Activated naive CD4-positive, alpha-beta T cell treated with anti-CD3 and anti-CD28 coated beads for 36 hours (primary cell): ENCODE measurements at regions of chr6 and their contacts with region 1.

Region 1: DNA sequence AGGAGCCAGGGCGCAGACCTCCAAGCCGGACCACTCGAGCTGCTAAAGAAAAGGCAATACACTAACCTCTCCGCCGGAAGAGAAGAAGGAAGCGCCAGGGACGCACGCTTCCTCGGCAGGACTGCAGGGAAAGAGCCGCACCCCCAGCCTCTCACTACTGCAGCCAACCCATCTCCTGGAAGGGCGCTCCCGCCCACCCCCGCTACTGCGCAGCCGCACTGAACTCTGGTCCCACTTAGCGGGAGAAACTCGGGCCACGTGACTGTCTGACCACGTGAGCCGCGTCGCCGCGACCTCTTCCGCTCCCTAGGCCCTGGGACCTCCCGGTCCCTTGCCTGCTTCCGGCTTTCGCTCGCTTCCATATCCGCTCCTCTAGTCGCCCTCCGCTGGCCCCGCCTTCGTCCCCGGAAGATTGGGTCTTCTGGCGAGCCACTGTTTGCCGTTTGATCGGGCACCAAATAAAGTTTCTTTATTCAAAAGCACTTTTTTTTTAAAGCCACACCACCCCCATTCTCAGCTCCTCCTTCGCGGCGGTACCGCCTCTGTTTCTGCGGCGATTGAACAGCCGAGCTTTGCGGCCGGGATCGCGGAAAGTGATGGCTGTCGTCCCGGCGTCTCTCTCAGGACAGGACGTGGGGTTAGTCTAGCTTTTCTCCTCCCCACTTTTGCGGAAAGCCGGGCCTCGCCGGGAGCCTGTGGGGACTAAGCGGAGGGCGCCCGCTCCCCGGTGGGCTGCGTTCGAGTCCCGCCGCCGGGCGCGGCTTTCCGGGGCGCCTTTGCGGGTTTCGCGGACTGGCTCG is at the start of gene RMND1:
- DNase-seq: peak; percentile 100
- H3K4me3 Mint-ChIP-seq: peak within 1 kb of the TSS; percentile 97
- H3K27ac Mint-ChIP-seq: peak within 1 kb of the TSS; percentile 86
- H3K4me1 Mint-ChIP-seq: peaks cover 27% of the 10 kb centered on the region
- H3K27me3 Mint-ChIP-seq: no peaks in the 10 kb centered on the region
- total RNA-seq, gene RMND1: 16.7 to 18.4 TPM

Region 2: GRCh38 chr6:149934249-149935156 is 1517.6 kb before region 1 on chr6:
- CTCF ChIA-PET with region 1: no interaction called
- intact Hi-C with region 1: loop called (anchors 1 kb)
- DNase-seq: peak; percentile 84
- H3K4me3 Mint-ChIP-seq: no peak overlapping the region
- H3K27ac Mint-ChIP-seq: no peak overlapping the region
- H3K4me1 Mint-ChIP-seq: peaks cover 17% of the 10 kb centered on the region
- H3K27me3 Mint-ChIP-seq: peaks cover 71% of the 10 kb centered on the region

Region 3: GRCh38 chr6:150987371-150987828 is 464.8 kb before region 1 on chr6:
- CTCF ChIA-PET with region 1: no interaction called
- intact Hi-C with region 1: loop called (anchors 5 kb)
- DNase-seq: peak; percentile 79
- H3K4me3 Mint-ChIP-seq: no peak overlapping the region
- H3K27ac Mint-ChIP-seq: peak overlapping the region; percentile 90
- H3K4me1 Mint-ChIP-seq: peaks cover 7% of the 10 kb centered on the region
- H3K27me3 Mint-ChIP-seq: no peaks in the 10 kb centered on the region

Region 4: DNA sequence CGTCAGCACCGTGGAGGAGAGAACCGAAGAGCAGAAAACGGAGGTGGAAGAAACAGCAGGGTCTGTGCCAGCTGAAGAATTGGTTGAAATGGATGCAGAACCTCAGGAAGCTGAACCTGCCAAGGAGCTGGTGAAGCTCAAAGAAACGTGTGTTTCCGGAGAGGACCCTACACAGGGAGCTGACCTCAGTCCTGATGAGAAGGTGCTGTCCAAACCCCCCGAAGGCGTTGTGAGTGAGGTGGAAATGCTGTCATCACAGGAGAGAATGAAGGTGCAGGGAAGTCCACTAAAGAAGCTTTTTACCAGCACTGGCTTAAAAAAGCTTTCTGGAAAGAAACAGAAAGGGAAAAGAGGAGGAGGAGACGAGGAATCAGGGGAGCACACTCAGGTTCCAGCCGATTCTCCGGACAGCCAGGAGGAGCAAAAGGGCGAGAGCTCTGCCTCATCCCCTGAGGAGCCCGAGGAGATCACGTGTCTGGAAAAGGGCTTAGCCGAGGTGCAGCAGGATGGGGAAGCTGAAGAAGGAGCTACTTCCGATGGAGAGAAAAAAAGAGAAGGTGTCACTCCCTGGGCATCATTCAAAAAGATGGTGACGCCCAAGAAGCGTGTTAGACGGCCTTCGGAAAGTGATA is 102.4 kb before region 1 on chr6:
- CTCF ChIA-PET with region 1: no interaction called
- intact Hi-C with region 1: no loop called
- DNase-seq: no peak
- H3K4me3 Mint-ChIP-seq: no peak overlapping the region
- H3K27ac Mint-ChIP-seq: no peak overlapping the region
- H3K4me1 Mint-ChIP-seq: no peaks in the 10 kb centered on the region
- H3K27me3 Mint-ChIP-seq: no peaks in the 10 kb centered on the region

Region 5: GRCh38 chr6:151390276-151391032 is 61.7 kb before region 1 on chr6:
- CTCF ChIA-PET with region 1: no interaction called
- intact Hi-C with region 1: loop called (anchors 1 kb)
- DNase-seq: peak; percentile 97
- H3K4me3 Mint-ChIP-seq: peak overlapping the region; percentile 95
- H3K27ac Mint-ChIP-seq: peak overlapping the region; percentile 70
- H3K4me1 Mint-ChIP-seq: peaks cover 54% of the 10 kb centered on the region
- H3K27me3 Mint-ChIP-seq: no peaks in the 10 kb centered on the region

Region 6: GRCh38 chr6:152184917-152185574 is 732.9 kb after region 1 on chr6:
- CTCF ChIA-PET with region 1: no interaction called
- intact Hi-C with region 1: loop called (anchors 1 kb)
- DNase-seq: peak; percentile 24
- H3K4me3 Mint-ChIP-seq: peak overlapping the region; percentile 79
- H3K27ac Mint-ChIP-seq: peak overlapping the region; percentile 94
- H3K4me1 Mint-ChIP-seq: peaks cover 69% of the 10 kb centered on the region
- H3K27me3 Mint-ChIP-seq: no peaks in the 10 kb centered on the region

Region 7: DNA sequence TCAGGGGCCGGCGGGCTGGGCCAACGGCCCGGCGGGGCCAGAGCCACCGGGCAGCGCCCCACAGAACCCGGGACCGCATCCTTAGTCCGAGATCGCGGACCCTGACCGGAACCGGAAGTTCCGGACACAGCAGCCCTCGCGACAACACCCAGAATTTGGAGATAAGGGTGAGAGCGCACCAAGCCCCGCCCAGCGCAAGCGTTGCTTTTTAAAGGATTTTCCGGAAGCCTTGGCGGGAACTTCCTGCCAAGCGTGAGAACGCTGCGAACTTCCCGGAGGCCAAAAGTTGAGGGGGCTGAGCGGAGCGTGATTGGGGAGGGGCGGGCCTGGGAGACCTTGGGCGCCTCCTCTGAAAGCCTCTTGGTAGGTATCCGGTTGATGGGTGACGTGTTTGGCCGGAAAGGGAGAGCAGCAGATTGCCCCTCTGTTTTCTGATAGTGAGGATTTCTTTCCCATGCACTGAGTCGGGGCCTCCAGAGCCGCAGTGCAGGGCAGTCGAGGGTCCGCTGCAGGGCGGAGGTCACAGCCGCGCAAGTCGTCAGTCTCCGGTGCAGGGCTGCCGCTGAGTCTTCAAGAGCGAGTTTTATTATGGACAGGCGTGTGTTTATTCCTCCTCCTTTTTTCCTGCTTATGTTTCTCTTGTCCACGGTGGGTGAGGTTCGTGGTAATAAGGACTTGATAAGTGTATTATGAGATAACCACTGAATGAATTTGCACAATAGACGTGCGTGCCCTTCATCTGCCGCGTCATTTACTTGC is 1550.6 kb after region 1 on chr6 and contains the start of gene MTRF1L:
- CTCF ChIA-PET with region 1: no interaction called
- intact Hi-C with region 1: loop called (anchors 5 kb)
- DNase-seq: peak; percentile 95
- H3K4me3 Mint-ChIP-seq: peak within 1 kb of the TSS; percentile 98
- H3K27ac Mint-ChIP-seq: peak within 1 kb of the TSS; percentile 94
- H3K4me1 Mint-ChIP-seq: peaks cover 33% of the 10 kb centered on the region
- H3K27me3 Mint-ChIP-seq: no peaks in the 10 kb centered on the region
- total RNA-seq, gene MTRF1L: 11.6 to 12.0 TPM